K562 (cell line): ENCODE measurements at regions of chr7 and their contacts with region 1.

Region 1: DNA sequence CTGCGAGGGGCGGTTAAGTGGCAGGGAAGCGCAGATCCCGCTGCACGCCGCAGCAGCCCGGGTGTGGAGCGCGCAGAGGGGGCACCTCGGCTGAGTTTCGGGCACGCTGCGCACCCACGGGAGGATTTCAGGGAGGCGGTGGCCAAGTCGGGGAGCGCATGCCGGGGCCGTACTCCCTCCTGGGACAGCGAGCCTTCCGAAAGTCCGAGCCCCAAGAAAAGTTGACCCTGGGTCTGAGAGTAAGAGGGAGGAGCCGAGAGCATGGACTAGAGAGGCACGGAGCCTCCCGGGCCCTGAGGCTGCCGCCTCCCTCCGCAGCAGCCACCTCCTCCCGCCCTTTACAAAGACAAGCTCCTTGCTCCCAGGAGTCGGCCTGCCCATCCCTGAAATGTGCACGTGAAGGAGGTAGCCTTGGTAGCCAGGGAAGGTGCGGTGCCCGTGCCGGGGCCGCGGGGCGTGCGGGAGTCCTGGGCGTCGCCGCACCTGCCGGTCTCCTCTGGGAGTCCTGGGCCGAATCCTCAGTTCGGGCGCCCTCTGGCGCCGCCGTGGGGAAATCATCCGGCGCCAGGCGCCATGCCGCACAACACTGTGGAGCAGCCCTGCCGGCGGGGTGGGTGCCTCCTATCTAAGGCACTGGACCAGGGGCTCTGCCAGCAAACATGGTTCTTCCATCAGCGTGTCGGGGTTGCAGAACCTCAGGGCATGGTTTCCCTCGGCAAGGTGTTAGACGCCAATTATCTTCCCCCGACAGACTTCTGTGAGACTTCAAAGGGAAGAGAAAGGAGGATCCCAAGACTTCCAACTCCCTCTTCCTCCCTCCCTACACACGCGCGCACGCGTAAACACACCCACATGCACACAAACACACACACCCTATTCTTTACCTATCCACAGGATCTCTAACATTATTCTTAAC is 104.0 kb downstream of the TRIL start:
- DNase-seq: peak; percentile 68 to 84 (median 70)
- ATAC-seq: peak; percentile 100
- H3K4me3 ChIP-seq: no peak overlapping the region
- H3K27ac ChIP-seq: no peak overlapping the region
- H3K4me1 ChIP-seq: peaks cover 0 to 8% of the 10 kb centered on the region in 2 experiments; a peak in 3 of 5 replicates
- H3K27me3 ChIP-seq: peaks cover 0 to 6% of the 10 kb centered on the region in 2 experiments; a peak in 1 of 5 replicates
- CTCF ChIP-seq: peak; percentile 79 to 89 (median 82)
- EP300 ChIP-seq: no peak
- POLR2A ChIP-seq: no peak
- RAD21 ChIP-seq: peak; percentile 67 to 81

Region 2: DNA sequence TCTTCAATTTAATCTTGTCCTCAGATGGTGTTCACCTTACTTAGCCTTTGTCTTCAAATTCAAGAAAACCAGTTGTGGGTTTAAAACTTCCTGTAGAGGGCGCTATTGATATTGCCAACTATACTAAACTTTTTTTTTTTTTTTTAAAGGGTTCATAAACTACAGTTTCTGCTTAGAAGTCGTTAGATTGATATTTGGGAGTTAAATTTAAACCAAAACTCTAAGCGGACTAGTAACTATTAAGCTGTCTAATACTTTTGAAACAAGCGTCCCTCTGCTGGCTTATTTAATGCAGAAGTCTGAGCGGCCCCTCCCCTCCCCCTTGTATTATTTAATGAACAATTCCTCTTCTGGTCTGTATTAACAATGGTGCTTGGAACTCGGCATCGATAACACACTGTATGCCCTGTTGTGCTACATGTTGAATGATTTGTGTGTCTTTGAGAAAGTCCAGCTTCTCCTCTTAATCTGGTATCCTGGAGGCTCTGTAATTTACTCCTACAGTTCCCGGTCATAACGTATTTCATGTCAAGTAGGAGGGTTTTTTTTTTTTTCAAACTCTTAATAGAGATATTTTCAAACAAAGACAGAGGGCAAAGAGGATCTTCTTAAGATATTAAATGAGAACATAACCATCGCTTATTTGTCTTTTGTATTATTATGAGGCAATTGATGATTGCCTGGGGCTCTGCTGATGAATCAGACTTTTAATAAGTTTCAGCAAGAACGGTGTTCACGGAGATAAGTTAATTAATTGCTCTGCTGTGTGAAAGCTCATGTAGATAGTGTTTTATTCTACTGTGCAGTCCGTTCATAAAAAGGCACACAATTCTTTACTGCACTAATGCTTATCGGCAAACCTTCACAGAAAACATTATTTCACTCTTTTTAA is 464.3 kb before region 1 on chr7:
- CTCF ChIA-PET with region 1: interaction called, 13 read pairs
- POLR2A ChIA-PET with region 1: interaction called, 4 read pairs
- in situ Hi-C with region 1: loop called (anchors 10 kb)
- intact Hi-C with region 1: loop called (anchors 1 kb)
- DNase-seq: peak; percentile 13 to 52 (median 42)
- ATAC-seq: no peak
- H3K4me3 ChIP-seq: no peak overlapping the region
- H3K27ac ChIP-seq: no peak overlapping the region
- H3K4me1 ChIP-seq: no peaks in the 10 kb centered on the region
- H3K27me3 ChIP-seq: no peaks in the 10 kb centered on the region
- CTCF ChIP-seq: peak; percentile 39 to 79 (median 63); a peak in 5 of 6 replicates
- EP300 ChIP-seq: no peak
- POLR2A ChIP-seq: no peak
- RAD21 ChIP-seq: peak; percentile 52 to 63

Region 3: GRCh38 chr7:28615091-28615490 is 239.0 kb before region 1 on chr7:
- CTCF ChIA-PET with region 1: interaction called, 4 read pairs
- POLR2A ChIA-PET with region 1: no interaction called
- in situ Hi-C with region 1: no loop called
- intact Hi-C with region 1: loop called (anchors 5 kb)
- DNase-seq: peak in 1 of 4 experiments; percentile 7
- ATAC-seq: no peak
- H3K4me3 ChIP-seq: no peak overlapping the region
- H3K27ac ChIP-seq: no peak overlapping the region
- H3K4me1 ChIP-seq: no peaks in the 10 kb centered on the region
- H3K27me3 ChIP-seq: no peaks in the 10 kb centered on the region
- CTCF ChIP-seq: 0 out of 6 replicates have a peak, but pooled peaks of 1 of the 3 experiments have one; percentile 11
- EP300 ChIP-seq: no peak
- POLR2A ChIP-seq: no peak
- RAD21 ChIP-seq: no peak

Region 4: GRCh38 chr7:28748933-28749584 is 105.0 kb before region 1 on chr7:
- CTCF ChIA-PET with region 1: no interaction called
- POLR2A ChIA-PET with region 1: no interaction called
- in situ Hi-C with region 1: no loop called
- intact Hi-C with region 1: no loop called
- DNase-seq: peak in 1 of 4 experiments; percentile 7
- ATAC-seq: no peak
- H3K4me3 ChIP-seq: no peak overlapping the region
- H3K27ac ChIP-seq: no peak overlapping the region
- H3K4me1 ChIP-seq: no peaks in the 10 kb centered on the region
- H3K27me3 ChIP-seq: no peaks in the 10 kb centered on the region; a peak in 1 of 5 replicates
- CTCF ChIP-seq: no peak
- EP300 ChIP-seq: no peak
- POLR2A ChIP-seq: no peak
- RAD21 ChIP-seq: no peak